ENCODE measurements at regions of chr9 and their contacts with region 1.

Region 1: DNA sequence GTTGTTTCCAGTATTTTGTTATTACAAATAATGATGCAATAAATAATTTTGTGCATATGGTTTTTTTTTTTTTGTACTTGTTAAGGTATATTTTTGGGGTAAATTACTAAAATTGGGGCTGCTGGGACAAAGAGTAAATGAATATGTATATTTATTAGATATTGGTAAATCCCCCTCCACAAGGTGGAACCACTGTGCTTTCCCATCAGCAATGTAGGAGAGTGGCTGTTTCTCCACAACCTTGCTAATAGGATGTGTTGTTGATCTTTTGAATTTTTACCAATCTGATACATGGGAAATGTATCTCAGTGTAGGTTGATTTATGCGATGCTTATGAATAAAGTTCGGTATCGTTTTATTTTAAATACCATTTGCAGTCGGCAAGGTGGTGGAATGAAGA is 118.1 kb downstream of the TRPM3 start:
- DNase-seq: no peak
- ATAC-seq: no peak
- H3K4me3 ChIP-seq: no peak overlapping the region
- H3K4me3 Mint-ChIP-seq: no peak overlapping the region
- H3K27ac ChIP-seq: no peak overlapping the region
- H3K27ac Mint-ChIP-seq: no peak overlapping the region
- H3K4me1 ChIP-seq: no peaks in the 10 kb centered on the region
- H3K4me1 Mint-ChIP-seq: no peaks in the 10 kb centered on the region
- H3K27me3 ChIP-seq: no peaks in the 10 kb centered on the region
- H3K27me3 Mint-ChIP-seq: peaks cover 0 to 4% of the 10 kb centered on the region in 2 donors

Region 2: GRCh38 chr9:70987986-70988385 is 15.4 kb before region 1 on chr9:
- CTCF ChIA-PET with region 1: no interaction called
- POLR2A ChIA-PET with region 1: no interaction called
- DNase-seq: no peak
- ATAC-seq: no peak
- H3K4me3 ChIP-seq: no peak overlapping the region
- H3K4me3 Mint-ChIP-seq: no peak overlapping the region
- H3K27ac ChIP-seq: no peak overlapping the region
- H3K27ac Mint-ChIP-seq: no peak overlapping the region
- H3K4me1 ChIP-seq: no peaks in the 10 kb centered on the region
- H3K4me1 Mint-ChIP-seq: no peaks in the 10 kb centered on the region
- H3K27me3 ChIP-seq: no peaks in the 10 kb centered on the region
- H3K27me3 Mint-ChIP-seq: peaks cover 0 to 4% of the 10 kb centered on the region in 2 donors

Region 3: DNA sequence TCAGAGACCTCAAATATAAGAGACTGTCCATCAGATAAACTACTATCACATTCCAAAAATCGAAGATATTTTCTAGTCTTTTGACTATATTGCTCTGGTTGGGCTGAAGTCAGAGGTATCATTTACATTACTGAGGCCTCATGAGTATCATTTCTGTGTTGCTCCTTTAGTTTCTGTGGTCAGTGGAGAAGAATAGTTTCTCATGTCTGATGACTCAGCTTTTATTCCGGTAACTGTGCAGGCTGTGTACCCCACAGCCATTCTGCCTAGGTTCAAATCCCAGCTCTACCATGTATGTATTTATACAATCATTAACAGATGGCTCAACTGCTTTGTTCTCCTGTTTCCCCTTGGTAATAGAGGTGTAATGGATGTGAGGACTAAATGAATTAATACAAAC is 1770.2 kb after region 1 on chr9:
- CTCF ChIA-PET with region 1: no interaction called
- POLR2A ChIA-PET with region 1: interaction called in 1 of 2 experiments, 10 read pairs
- DNase-seq: no peak
- ATAC-seq: no peak
- H3K4me3 ChIP-seq: no peak overlapping the region
- H3K4me3 Mint-ChIP-seq: no peak overlapping the region
- H3K27ac ChIP-seq: no peak overlapping the region
- H3K27ac Mint-ChIP-seq: no peak overlapping the region
- H3K4me1 ChIP-seq: no peaks in the 10 kb centered on the region
- H3K4me1 Mint-ChIP-seq: no peaks in the 10 kb centered on the region
- H3K27me3 ChIP-seq: peaks cover 0 to under 1% of the 10 kb centered on the region in 2 experiments
- H3K27me3 Mint-ChIP-seq: peaks cover 6% of the 10 kb centered on the region in 2 donors

Measured in T-cell (primary cell).